GM10248 (cell line): ENCODE measurements at regions of chr19 and their contacts with region 1.

Region 1: DNA sequence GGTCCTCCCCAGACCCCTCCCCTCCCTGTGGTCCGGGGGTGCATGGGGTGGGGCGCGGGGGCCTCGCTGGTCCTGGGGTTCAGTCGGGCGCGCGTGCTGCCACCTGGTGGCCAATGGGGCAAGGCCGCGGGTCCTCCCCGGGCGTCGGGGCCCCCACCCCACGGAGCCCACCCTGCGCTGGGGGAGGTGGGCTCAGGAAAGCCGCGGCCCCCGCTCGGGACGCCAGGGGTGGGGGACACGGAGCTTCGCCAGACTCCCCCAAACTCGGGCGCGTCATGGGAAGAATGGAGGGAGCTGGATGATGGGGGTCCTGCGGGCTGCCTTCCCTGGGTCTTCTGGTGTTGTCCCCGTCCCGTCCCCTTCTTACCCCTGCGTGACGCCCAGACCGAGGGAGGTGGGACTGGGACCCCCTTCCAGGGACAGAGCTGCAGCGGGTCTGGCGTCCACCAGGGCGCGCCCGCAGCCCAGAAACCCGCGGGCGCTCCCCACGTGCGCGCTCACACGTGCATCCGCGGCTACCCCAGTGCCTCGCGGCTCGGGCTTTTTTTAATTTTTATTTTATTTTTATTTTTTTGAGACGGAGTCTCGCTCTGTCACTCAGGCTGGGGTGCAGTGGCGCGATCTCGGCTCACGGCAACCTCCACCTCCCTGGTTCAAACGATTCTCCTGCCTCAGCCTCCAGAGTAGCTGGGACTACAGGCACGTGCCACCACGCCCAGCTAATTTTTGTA is 19.8 kb upstream of the TCF3 start:
- DNase-seq: peak; percentile 78
- CTCF ChIP-seq: peak; percentile 87

Region 2: GRCh38 chr19:1540365-1540925 is 131.8 kb before region 1 on chr19:
- CTCF ChIA-PET with region 1: interaction called, 45 read pairs
- POLR2A ChIA-PET with region 1: no interaction called
- DNase-seq: no peak
- CTCF ChIP-seq: no peak

Region 3: DNA sequence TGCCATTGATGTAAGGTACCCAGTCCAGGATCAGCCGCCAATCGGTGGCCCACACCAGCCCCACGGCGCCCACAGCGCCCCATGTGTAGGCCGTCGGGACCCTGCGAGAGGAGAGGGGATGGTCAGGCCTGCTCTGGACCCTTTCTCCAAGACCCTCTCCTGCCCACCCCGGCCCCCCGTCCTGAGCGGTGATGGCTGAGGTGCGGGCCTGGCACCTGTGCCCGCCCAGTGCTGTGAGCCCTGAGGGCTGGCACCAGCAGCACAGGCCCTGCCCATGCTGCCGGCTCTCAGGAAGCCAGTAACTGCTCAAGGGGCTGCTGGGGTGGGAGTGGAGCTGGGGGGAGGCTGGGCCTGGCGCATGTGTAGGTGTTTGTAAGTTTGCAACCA is 72.8 kb before region 1 on chr19:
- CTCF ChIA-PET with region 1: interaction called, 10 read pairs
- POLR2A ChIA-PET with region 1: no interaction called
- DNase-seq: no peak
- CTCF ChIP-seq: no peak

Region 4: GRCh38 chr19:1613146-1613545 is 59.1 kb before region 1 on chr19:
- CTCF ChIA-PET with region 1: interaction called, 19 read pairs
- POLR2A ChIA-PET with region 1: no interaction called
- DNase-seq: no peak
- CTCF ChIP-seq: no peak

Region 5: DNA sequence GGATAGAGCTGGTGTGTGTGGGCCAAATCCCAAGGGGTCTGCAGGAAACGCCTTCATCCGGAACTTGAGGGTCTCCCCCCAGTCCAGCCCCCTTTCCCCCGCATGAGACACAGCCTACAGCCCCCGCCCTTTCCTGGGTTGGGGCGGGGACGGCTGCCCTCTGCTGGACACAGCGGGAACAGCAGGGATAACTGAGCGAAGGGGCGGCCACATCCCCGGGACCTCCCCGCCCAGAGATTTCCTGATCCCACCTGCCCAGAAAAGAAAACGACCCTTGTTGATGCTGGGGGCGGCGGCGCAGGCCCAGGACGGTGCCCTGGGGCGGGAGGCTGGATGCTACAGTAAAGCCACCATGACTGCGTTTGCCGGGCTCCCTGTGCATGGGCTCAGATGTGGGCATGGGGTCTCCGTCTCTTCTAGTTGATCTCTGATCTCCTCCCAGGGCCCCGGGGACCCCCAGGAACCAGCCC is 95.3 kb after region 1 on chr19:
- CTCF ChIA-PET with region 1: interaction called, 28 read pairs
- POLR2A ChIA-PET with region 1: no interaction called
- DNase-seq: peak; percentile 88
- CTCF ChIP-seq: peak; percentile 98

Region 6: DNA sequence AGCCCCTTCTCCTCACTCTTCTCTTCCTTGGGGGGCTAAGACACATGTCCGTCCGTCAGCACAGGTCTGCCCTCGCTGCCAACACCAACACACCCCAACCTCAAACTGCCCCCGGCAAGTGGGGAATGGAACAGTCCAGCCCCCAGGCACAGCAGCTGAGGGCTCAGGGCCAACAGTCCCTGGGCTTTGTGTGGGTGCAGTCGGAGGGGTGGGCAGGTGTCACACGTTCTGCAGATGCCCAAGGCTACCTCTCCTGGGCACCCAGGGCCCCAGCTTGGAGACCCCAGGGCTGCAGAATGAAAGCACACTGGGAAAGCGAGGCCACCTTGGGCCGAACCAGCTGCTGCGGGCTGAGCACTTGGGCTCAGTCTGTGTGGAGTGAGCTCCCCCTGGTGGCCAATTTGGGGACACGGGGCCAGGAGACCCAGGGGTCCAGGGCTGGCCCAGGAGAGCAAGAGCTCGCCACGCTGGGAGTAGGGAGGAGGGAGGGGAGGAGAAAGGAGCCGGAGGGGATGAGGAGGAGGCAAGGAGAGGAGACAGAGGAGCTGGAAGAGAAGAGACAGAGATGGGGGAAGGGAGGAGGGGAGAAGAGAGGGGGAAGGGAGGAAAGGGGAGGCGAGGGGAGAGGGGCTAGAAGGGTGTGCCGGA is 153.8 kb after region 1 on chr19:
- CTCF ChIA-PET with region 1: interaction called, 16 read pairs
- POLR2A ChIA-PET with region 1: no interaction called
- DNase-seq: peak; percentile 90
- CTCF ChIP-seq: peak; percentile 96